CD8-positive, alpha-beta T cell (primary cell): ENCODE measurements at regions of chr1 and their contacts with region 1.

Region 1: GRCh38 chr1:111592389-111593361 is 26.9 kb upstream of the RAP1A start:
- DNase-seq: peak; percentile 75 to 96 (median 92)
- ATAC-seq: peak; percentile 91
- H3K4me3 ChIP-seq: peak overlapping the region in 1 of 2 experiments; percentile 38
- H3K4me3 Mint-ChIP-seq: peak overlapping the region; percentile 53
- H3K27ac ChIP-seq: peak overlapping the region; percentile 48 to 72
- H3K27ac Mint-ChIP-seq: peak overlapping the region; percentile 89
- H3K4me1 ChIP-seq: peaks cover 64% of the 10 kb centered on the region
- H3K4me1 Mint-ChIP-seq: peaks cover 58% of the 10 kb centered on the region
- H3K27me3 ChIP-seq: no peaks in the 10 kb centered on the region
- H3K27me3 Mint-ChIP-seq: no peaks in the 10 kb centered on the region
- CTCF ChIP-seq: no peak

Region 2: DNA sequence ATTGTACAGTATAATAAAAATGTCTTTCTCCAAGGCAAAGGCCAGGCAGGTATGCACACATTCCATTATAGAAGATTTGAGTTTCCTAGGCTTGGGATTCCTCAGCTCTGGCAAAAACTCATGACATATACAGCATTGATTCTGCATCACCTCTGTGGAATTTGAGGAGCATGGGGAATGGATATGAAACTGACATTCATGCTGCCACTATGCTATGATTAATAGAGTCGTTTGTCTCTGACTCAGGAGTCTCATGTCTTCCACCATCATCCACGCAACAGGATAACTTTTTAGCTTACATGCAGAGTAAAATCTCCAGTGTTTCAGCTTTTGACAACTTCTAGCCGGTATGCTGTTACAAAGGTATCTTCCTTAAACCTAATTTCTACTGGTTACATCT is 39.5 kb before region 1 on chr1:
- CTCF ChIA-PET with region 1: no interaction called
- POLR2A ChIA-PET with region 1: interaction called, 5 read pairs
- intact Hi-C with region 1: loop called in 1 of 2 experiments (anchors 2 kb)
- DNase-seq: no peak
- ATAC-seq: no peak
- H3K4me3 ChIP-seq: no peak overlapping the region
- H3K4me3 Mint-ChIP-seq: no peak overlapping the region
- H3K27ac ChIP-seq: no peak overlapping the region
- H3K27ac Mint-ChIP-seq: no peak overlapping the region
- H3K4me1 ChIP-seq: no peaks in the 10 kb centered on the region
- H3K4me1 Mint-ChIP-seq: peaks cover 3% of the 10 kb centered on the region
- H3K27me3 ChIP-seq: no peaks in the 10 kb centered on the region
- H3K27me3 Mint-ChIP-seq: no peaks in the 10 kb centered on the region
- CTCF ChIP-seq: no peak

Region 3: DNA sequence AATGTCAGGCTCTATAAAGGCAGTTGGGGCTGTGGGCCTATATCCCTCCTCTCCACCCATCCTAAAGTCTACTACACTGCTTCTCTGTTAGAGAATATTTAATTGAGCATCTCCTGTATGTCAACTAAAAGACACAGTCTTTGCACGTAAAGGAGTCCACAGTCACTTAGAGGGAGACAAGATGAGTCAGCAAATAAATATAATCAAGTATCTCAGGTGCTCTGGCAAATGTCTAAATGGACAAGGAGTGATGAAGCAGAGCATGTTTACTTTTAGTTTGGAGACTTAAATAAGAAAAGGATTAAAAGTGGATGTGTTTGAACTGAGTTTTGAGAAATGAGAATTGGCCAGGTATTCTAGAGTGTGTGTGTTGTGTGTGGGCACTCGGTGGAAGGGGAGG is 14.9 kb before region 1 on chr1:
- CTCF ChIA-PET with region 1: interaction called, 4 read pairs
- POLR2A ChIA-PET with region 1: interaction called, 15 read pairs
- intact Hi-C with region 1: loop called in 1 of 2 experiments (anchors 2 kb)
- DNase-seq: no peak
- ATAC-seq: no peak
- H3K4me3 ChIP-seq: no peak overlapping the region
- H3K4me3 Mint-ChIP-seq: no peak overlapping the region
- H3K27ac ChIP-seq: no peak overlapping the region
- H3K27ac Mint-ChIP-seq: no peak overlapping the region
- H3K4me1 ChIP-seq: no peaks in the 10 kb centered on the region
- H3K4me1 Mint-ChIP-seq: peaks cover 7% of the 10 kb centered on the region
- H3K27me3 ChIP-seq: no peaks in the 10 kb centered on the region
- H3K27me3 Mint-ChIP-seq: no peaks in the 10 kb centered on the region
- CTCF ChIP-seq: no peak

Region 4: DNA sequence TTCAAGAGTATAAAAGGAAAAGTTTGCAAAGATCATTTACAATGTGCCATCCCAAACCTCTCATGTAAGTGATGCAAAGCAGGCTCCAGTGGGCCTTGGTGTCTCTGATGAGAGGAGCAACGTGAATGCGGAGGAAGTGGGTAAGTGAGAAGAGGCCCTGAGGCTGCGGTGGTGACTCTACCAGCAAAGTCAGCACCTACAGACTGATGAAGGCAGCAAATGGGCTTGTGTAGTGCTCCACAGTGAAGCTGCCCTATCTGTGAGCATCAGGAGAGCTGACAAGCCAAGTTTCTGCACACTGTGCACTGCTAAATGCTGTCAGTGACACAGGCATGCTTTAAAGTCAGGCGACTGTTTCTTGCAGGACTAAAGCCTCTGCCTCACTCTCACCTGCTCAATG is 11.3 kb after region 1 on chr1:
- CTCF ChIA-PET with region 1: interaction called, 17 read pairs
- POLR2A ChIA-PET with region 1: interaction called, 23 read pairs
- intact Hi-C with region 1: loop called in 1 of 2 experiments (anchors 1 kb)
- DNase-seq: peak; percentile 57 to 91 (median 81)
- ATAC-seq: peak; percentile 96
- H3K4me3 ChIP-seq: no peak overlapping the region
- H3K4me3 Mint-ChIP-seq: peak overlapping the region; percentile 52
- H3K27ac ChIP-seq: peak overlapping the region; percentile 13 to 67
- H3K27ac Mint-ChIP-seq: peak overlapping the region; percentile 89
- H3K4me1 ChIP-seq: peaks cover 51% of the 10 kb centered on the region
- H3K4me1 Mint-ChIP-seq: peaks cover 72% of the 10 kb centered on the region
- H3K27me3 ChIP-seq: no peaks in the 10 kb centered on the region
- H3K27me3 Mint-ChIP-seq: no peaks in the 10 kb centered on the region
- CTCF ChIP-seq: no peak

Region 5: DNA sequence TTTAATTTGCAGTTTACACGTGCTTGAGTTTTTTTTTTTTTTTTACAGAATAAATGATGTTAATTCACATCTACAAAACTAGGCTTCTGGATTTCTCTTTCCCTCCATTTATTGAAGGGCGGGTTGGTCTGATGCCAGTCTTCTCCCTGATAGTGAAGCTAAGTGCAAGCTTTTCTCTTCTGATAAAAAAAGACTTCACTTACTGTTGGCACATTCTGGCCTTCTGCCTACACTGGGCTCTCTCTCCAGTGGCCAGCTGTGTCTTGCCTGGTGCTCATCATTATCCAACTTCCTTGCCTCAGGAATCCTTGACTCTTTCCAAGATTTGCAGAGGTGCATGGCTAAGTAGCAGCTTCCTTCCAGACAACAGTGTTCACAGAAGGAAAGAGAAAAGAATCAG is 19.3 kb after region 1 on chr1:
- CTCF ChIA-PET with region 1: interaction called, 3 read pairs
- POLR2A ChIA-PET with region 1: interaction called, 10 read pairs
- intact Hi-C with region 1: no loop called
- DNase-seq: no peak
- ATAC-seq: no peak
- H3K4me3 ChIP-seq: no peak overlapping the region
- H3K4me3 Mint-ChIP-seq: no peak overlapping the region
- H3K27ac ChIP-seq: no peak overlapping the region
- H3K27ac Mint-ChIP-seq: no peak overlapping the region
- H3K4me1 ChIP-seq: peaks cover 13% of the 10 kb centered on the region
- H3K4me1 Mint-ChIP-seq: peaks cover 25% of the 10 kb centered on the region
- H3K27me3 ChIP-seq: no peaks in the 10 kb centered on the region
- H3K27me3 Mint-ChIP-seq: no peaks in the 10 kb centered on the region
- CTCF ChIP-seq: no peak

Region 6: DNA sequence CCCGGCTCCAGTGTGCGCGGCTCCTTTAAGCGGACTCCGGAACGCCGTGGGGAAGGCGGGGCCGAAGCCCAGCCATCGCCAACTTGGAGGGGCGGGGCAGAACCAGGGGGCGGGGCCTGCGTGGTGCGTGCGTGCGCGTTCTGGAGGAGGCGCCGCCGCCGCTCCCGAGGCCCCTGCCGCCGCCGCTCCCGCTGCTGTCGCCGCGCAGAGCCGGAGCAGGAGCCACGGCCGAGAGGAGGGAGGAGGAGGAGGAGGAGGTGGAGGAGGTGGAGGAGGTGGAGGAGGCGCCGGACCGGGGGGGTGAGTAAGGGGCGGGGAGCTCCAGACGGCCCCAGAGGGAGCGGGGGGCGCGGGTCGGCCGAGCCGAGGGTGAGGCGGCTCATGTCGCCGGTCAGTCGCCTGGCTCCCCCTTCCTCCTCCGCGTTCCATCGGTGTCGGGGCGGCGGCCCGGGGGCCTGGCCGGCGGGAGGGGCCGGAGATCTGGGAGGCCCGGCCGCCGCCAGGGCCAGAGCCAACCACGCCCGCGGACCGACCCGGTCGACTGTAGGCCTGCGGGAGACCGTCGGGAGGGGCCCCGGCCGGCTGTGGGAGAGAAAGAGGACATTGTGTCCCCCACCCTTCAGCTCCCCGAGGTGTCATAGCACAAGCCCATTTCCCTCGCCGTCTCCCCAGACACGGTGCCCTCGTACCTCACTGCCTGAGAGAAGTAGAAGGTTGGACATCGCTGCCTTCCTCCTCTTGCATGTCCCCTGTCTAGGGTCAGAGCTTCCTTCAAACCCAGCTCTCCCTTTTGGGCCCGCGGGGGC is 27.2 kb after region 1 on chr1 and contains the start of gene RAP1A:
- CTCF ChIA-PET with region 1: interaction called, 3 read pairs
- POLR2A ChIA-PET with region 1: interaction called, 9 read pairs
- intact Hi-C with region 1: loop called (anchors 1 kb)
- DNase-seq: peak; percentile 93 to 97 (median 94)
- ATAC-seq: peak; percentile 80
- H3K4me3 ChIP-seq: peak within 1 kb of the TSS; percentile 71 to 87
- H3K4me3 Mint-ChIP-seq: peak within 1 kb of the TSS; percentile 95
- H3K27ac ChIP-seq: peak within 1 kb of the TSS; percentile 66 to 86
- H3K27ac Mint-ChIP-seq: peak within 1 kb of the TSS; percentile 95
- H3K4me1 ChIP-seq: peaks cover 60% of the 10 kb centered on the region
- H3K4me1 Mint-ChIP-seq: peaks cover 70% of the 10 kb centered on the region
- H3K27me3 ChIP-seq: no peaks in the 10 kb centered on the region
- H3K27me3 Mint-ChIP-seq: no peaks in the 10 kb centered on the region
- CTCF ChIP-seq: no peak
- total RNA-seq, gene RAP1A: 63.4 to 68.5 TPM

Region 7: GRCh38 chr1:111656086-111657017 is 63.7 kb after region 1 on chr1:
- CTCF ChIA-PET with region 1: no interaction called
- POLR2A ChIA-PET with region 1: interaction called, 6 read pairs
- intact Hi-C with region 1: loop called in 1 of 2 experiments (anchors 5 kb)
- DNase-seq: peak in 2 of 9 experiments; percentile 57 to 68
- ATAC-seq: no peak
- H3K4me3 ChIP-seq: no peak overlapping the region
- H3K4me3 Mint-ChIP-seq: no peak overlapping the region
- H3K27ac ChIP-seq: no peak overlapping the region
- H3K27ac Mint-ChIP-seq: peak overlapping the region; percentile 33
- H3K4me1 ChIP-seq: peaks cover 63% of the 10 kb centered on the region
- H3K4me1 Mint-ChIP-seq: peaks cover 53% of the 10 kb centered on the region
- H3K27me3 ChIP-seq: no peaks in the 10 kb centered on the region
- H3K27me3 Mint-ChIP-seq: no peaks in the 10 kb centered on the region
- CTCF ChIP-seq: peak; percentile 62